Activated CD4-positive, alpha-beta memory T cell treated with anti-CD3 and anti-CD28 coated beads for 36 hours (primary cell): ENCODE measurements at regions of chr7 and their contacts with region 1.

Region 1: DNA sequence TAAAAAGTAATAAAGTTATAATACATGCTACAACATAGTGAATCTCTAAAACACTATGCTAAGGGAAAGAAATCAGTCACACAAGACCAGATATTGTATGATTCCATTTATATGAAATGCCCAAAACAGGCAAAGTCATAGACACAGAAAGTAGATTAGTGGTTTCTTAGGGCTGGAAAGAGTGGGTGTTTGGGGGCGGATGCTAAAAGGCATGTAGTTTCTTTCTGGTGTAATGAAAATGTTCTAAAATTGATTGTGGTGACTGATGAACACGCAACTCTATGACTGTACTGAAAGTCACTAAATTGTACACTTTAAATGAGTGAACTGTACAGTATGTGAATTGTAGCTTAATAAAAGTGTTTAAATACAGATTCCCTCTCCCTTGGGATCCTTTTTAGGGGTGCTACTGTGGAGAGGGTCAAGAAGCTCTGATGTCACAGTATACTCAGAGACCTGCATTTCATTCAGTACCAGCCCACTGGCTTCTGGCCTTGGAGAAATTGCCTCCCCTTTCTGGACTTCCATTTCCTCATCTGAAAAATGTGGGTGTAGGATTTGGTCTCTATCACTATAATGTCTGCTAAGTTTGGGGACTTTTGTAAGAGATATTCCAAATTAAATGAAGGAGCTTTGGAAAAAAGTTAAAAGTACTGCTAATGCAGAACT is 46.4 kb downstream of the AOAH start:
- DNase-seq: peak; percentile 85
- H3K4me3 Mint-ChIP-seq: peak overlapping the region; percentile 24
- H3K27ac Mint-ChIP-seq: peak overlapping the region; percentile 74
- H3K4me1 Mint-ChIP-seq: peaks cover 39% of the 10 kb centered on the region
- H3K27me3 Mint-ChIP-seq: no peaks in the 10 kb centered on the region

Region 2: DNA sequence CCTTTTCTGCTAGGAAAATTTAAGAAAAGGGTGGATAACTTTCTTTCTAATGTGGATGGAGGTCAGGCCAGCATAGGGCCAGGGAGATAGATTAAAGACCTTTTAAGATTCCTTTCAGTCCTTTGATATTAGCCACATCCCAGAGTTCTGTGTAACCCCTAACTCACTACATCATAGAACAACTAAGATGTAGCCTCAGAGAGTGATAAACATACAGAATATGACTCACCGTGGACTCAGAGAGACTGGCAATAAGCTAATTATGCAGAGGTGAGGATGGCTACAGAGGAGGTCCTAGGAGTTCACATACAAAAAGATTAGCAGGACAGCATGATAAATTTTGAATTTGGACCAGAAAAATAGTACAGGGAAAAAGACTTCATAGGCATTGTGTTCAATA is 94.6 kb before region 1 on chr7:
- CTCF ChIA-PET with region 1: interaction called, 4 read pairs
- POLR2A ChIA-PET with region 1: no interaction called
- intact Hi-C with region 1: loop called (anchors 5 kb)
- DNase-seq: no peak
- H3K4me3 Mint-ChIP-seq: no peak overlapping the region
- H3K27ac Mint-ChIP-seq: peak overlapping the region; percentile 47
- H3K4me1 Mint-ChIP-seq: peaks cover 19% of the 10 kb centered on the region
- H3K27me3 Mint-ChIP-seq: no peaks in the 10 kb centered on the region

Region 3: GRCh38 chr7:36600869-36601530 is 76.9 kb before region 1 on chr7:
- CTCF ChIA-PET with region 1: interaction called, 3 read pairs
- POLR2A ChIA-PET with region 1: interaction called, 3 read pairs
- intact Hi-C with region 1: loop called (anchors 1 kb)
- DNase-seq: peak; percentile 40
- H3K4me3 Mint-ChIP-seq: no peak overlapping the region
- H3K27ac Mint-ChIP-seq: no peak overlapping the region
- H3K4me1 Mint-ChIP-seq: peaks cover 53% of the 10 kb centered on the region
- H3K27me3 Mint-ChIP-seq: no peaks in the 10 kb centered on the region

Region 4: DNA sequence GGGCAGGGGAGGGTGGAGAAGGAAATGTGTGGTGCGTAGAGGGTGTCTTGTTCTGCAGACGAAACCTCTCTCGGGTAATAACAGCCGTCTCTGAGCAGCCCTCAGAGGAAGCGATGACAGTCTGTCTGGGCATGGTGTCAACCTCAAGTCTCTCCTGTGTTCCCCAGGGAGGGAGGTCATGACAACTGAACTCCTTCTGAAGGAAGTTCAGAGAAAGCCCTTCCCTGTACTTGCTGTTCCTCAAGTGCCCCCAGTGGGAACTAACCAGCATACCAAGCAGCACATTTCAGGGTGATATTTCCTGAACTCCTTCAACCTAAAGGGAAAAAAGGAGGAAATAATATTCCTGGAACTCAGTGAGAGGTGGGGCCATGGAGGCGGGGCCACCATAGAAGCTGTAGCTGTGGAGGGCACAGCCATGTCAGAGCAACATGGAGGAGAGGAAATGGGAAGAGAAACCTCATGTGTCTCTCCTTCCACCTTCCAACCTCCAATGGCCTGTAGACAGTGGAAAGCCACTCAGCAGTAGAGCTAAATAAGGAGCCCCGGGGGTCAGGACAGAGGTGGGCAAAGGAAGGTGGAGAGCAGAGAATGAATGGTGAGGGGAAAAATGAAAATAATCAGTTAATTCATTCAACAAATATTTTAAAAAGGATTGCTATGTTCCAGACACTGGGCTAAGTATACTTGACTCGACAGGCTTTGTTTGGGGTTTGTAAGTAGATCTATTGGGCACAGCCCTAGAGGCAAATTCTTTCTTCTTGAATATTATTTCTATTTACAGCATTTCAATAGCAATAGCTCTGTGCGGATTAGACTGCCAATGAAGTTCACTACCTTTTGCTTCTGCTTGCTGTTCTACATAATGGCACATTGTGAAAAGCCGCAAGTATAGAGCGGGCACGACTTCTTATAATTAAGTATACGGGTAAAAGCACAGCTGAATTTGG is 107.4 kb after region 1 on chr7:
- CTCF ChIA-PET with region 1: no interaction called
- POLR2A ChIA-PET with region 1: no interaction called
- intact Hi-C with region 1: loop called (anchors 2 kb)
- DNase-seq: peak; percentile 68
- H3K4me3 Mint-ChIP-seq: peak overlapping the region; percentile 4
- H3K27ac Mint-ChIP-seq: peak overlapping the region; percentile 47
- H3K4me1 Mint-ChIP-seq: peaks cover 75% of the 10 kb centered on the region
- H3K27me3 Mint-ChIP-seq: no peaks in the 10 kb centered on the region

Region 5: GRCh38 chr7:36852017-36852416 is 174.1 kb after region 1 on chr7:
- CTCF ChIA-PET with region 1: no interaction called
- POLR2A ChIA-PET with region 1: interaction called, 4 read pairs
- intact Hi-C with region 1: loop called (anchors 5 kb)
- DNase-seq: peak; percentile 40
- H3K4me3 Mint-ChIP-seq: no peak overlapping the region
- H3K27ac Mint-ChIP-seq: no peak overlapping the region
- H3K4me1 Mint-ChIP-seq: peaks cover 17% of the 10 kb centered on the region
- H3K27me3 Mint-ChIP-seq: no peaks in the 10 kb centered on the region

Region 6: GRCh38 chr7:36962367-36962766 is 284.5 kb after region 1 on chr7:
- CTCF ChIA-PET with region 1: no interaction called
- POLR2A ChIA-PET with region 1: no interaction called
- intact Hi-C with region 1: loop called (anchors 5 kb)
- DNase-seq: no peak
- H3K4me3 Mint-ChIP-seq: no peak overlapping the region
- H3K27ac Mint-ChIP-seq: no peak overlapping the region
- H3K4me1 Mint-ChIP-seq: peaks cover 54% of the 10 kb centered on the region
- H3K27me3 Mint-ChIP-seq: no peaks in the 10 kb centered on the region

Region 7: GRCh38 chr7:37065779-37066271 is 387.9 kb after region 1 on chr7:
- CTCF ChIA-PET with region 1: no interaction called
- POLR2A ChIA-PET with region 1: no interaction called
- intact Hi-C with region 1: loop called (anchors 2 kb)
- DNase-seq: peak; percentile 68
- H3K4me3 Mint-ChIP-seq: no peak overlapping the region
- H3K27ac Mint-ChIP-seq: peak overlapping the region; percentile 74
- H3K4me1 Mint-ChIP-seq: peaks cover 70% of the 10 kb centered on the region
- H3K27me3 Mint-ChIP-seq: no peaks in the 10 kb centered on the region